PC-3 (cell line): ENCODE measurements at regions of chr18 and their contacts with region 1.

Region 1: GRCh38 chr18:23077493-23078256 is 57.6 kb upstream of the CABLES1 start:
- DNase-seq: peak; percentile 60
- ATAC-seq: peak; percentile 94
- H3K4me3 ChIP-seq: no peak overlapping the region
- H3K27ac ChIP-seq: 0 out of 2 replicates have a peak overlapping the region, but pooled peaks have one; percentile 2
- H3K4me1 ChIP-seq: peaks cover 13% of the 10 kb centered on the region
- H3K27me3 ChIP-seq: no peaks in the 10 kb centered on the region
- CTCF ChIP-seq: peak; percentile 68

Region 2: DNA sequence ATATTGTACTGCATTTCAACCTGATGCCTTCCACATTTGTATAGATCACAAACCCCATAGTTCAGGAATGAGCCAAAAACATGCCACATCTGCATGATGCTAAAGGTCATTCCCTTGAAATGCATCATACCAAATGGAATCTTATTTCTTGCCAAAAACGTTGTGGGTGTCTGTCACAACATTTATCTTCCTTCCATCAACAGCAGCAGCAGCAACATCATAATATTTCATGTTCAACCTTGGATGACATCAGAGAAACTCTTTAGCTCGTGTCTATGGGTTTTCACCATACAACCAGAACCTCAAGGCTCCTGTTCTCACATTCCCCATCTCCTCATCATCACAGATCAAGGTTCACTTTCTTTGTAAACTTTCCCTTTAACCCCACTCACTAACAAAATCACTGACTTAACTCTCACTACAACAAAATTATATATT is 438.6 kb before region 1 on chr18:
- CTCF ChIA-PET with region 1: no interaction called
- POLR2A ChIA-PET with region 1: no interaction called
- intact Hi-C with region 1: no loop called
- DNase-seq: peak; percentile 76
- ATAC-seq: peak; percentile 14; the same call in 1 of the 2 replicates
- H3K4me3 ChIP-seq: no peak overlapping the region
- H3K27ac ChIP-seq: no peak overlapping the region
- H3K4me1 ChIP-seq: peaks cover 31% of the 10 kb centered on the region
- H3K27me3 ChIP-seq: no peaks in the 10 kb centered on the region
- CTCF ChIP-seq: no peak

Region 3: GRCh38 chr18:23115683-23116096 is 38.0 kb after region 1 on chr18:
- CTCF ChIA-PET with region 1: no interaction called
- POLR2A ChIA-PET with region 1: no interaction called
- intact Hi-C with region 1: loop called (anchors 5 kb)
- DNase-seq: peak; percentile 99
- ATAC-seq: peak; percentile 98
- H3K4me3 ChIP-seq: no peak overlapping the region
- H3K27ac ChIP-seq: peak overlapping the region; percentile 95
- H3K4me1 ChIP-seq: peaks cover 24% of the 10 kb centered on the region
- H3K27me3 ChIP-seq: no peaks in the 10 kb centered on the region
- CTCF ChIP-seq: no peak

Region 4: DNA sequence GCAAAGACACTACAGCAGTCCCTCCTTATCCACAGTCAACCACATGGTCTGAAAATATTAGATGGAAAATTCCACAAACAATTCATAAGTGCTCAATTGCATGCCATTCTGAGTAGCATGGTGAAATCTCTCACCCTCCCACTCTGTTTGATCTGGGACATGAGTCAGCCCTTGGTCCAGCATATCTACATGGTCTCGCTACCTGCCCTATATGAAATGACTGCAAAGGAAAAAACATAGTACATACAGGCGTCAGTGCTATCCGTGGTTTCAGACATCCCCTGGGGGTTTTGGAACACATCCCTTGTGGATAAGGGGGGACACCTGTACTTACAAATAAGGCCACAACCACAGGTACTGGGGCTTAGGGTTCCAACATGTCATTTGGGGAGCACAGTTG is 131.4 kb after region 1 on chr18:
- CTCF ChIA-PET with region 1: no interaction called
- POLR2A ChIA-PET with region 1: no interaction called
- intact Hi-C with region 1: no loop called
- DNase-seq: peak; percentile 71
- ATAC-seq: peak; percentile 87
- H3K4me3 ChIP-seq: no peak overlapping the region
- H3K27ac ChIP-seq: peak overlapping the region; percentile 56
- H3K4me1 ChIP-seq: peaks cover 26% of the 10 kb centered on the region
- H3K27me3 ChIP-seq: no peaks in the 10 kb centered on the region
- CTCF ChIP-seq: no peak

Region 5: DNA sequence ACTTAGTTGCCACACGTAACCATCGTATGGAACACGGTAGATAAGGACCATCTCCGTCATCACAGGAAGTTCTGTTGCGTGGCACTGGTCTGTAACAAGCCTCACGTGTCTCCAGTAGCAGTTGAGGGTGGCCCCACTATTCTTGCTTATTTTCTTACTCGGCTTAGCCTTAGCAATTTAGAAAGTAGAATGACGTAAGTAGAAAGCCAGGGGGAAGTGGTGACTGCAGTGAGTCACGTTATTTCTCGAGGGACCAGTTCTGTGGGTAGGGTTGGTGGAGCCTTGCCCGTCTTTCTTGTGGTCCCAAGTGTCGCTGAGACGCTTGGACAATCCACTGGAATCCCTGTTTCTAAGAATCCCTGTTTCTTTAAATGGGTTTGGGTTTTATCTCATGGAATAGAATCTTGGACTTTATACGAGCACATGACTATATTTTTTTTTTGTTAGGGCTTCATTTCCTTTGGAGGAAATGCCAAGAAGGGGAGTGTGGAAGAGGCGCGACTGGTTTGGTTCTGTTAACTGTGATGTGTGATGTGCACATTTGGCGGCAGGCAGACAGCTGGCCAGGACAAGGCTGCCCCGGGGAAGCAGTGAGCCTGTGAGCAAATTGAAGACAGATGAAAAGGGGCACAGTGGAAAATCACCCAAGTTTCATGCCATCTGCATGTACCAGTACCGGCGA is 153.8 kb after region 1 on chr18:
- CTCF ChIA-PET with region 1: no interaction called
- POLR2A ChIA-PET with region 1: no interaction called
- intact Hi-C with region 1: loop called (anchors 5 kb)
- DNase-seq: peak; percentile 92
- ATAC-seq: peak; percentile 77
- H3K4me3 ChIP-seq: no peak overlapping the region
- H3K27ac ChIP-seq: peak overlapping the region; percentile 79
- H3K4me1 ChIP-seq: peaks cover 38% of the 10 kb centered on the region
- H3K27me3 ChIP-seq: no peaks in the 10 kb centered on the region
- CTCF ChIP-seq: no peak

Region 6: GRCh38 chr18:23291456-23292205 is 214.0 kb after region 1 on chr18:
- CTCF ChIA-PET with region 1: no interaction called
- POLR2A ChIA-PET with region 1: no interaction called
- intact Hi-C with region 1: no loop called
- DNase-seq: peak; percentile 86
- ATAC-seq: peak; percentile 95
- H3K4me3 ChIP-seq: no peak overlapping the region
- H3K27ac ChIP-seq: peak overlapping the region; percentile 71
- H3K4me1 ChIP-seq: peaks cover 20% of the 10 kb centered on the region
- H3K27me3 ChIP-seq: no peaks in the 10 kb centered on the region
- CTCF ChIP-seq: no peak

Region 7: GRCh38 chr18:23307567-23308295 is 230.1 kb after region 1 on chr18:
- CTCF ChIA-PET with region 1: interaction called, 11 read pairs
- POLR2A ChIA-PET with region 1: no interaction called
- intact Hi-C with region 1: no loop called
- DNase-seq: peak; percentile 32
- ATAC-seq: peak; percentile 16; the same call in 1 of the 2 replicates
- H3K4me3 ChIP-seq: no peak overlapping the region
- H3K27ac ChIP-seq: no peak overlapping the region
- H3K4me1 ChIP-seq: peaks cover 28% of the 10 kb centered on the region
- H3K27me3 ChIP-seq: no peaks in the 10 kb centered on the region
- CTCF ChIP-seq: no peak

Region 8: DNA sequence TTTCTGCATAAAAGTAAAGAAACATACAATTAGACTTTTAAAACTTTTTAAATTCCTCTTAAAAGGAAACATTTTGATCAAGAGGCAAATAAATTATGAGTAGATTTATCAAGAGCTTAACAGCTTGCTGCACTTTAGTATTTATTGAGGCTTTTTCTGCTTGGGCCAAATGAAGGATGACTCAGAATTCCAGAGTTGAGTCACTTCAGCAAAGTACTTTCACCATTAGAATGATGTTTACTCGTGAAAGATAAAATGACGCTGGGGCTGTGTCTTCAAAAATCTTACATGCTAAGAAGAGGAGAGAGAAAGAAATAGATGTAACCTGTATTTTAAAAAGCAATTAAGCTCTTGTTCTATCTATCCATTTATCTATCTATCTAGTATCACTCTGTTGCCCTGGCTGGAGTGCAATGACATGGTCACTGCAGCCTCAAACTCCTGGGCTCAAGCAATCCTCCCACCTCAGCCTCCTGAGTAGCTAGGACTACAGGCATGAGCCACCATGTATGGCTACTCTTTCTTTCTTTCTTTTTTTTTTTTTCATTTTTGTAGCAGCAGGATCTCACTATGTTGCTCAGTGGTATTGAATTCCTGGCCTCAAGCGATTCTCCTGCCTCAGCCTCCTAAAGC is 300.1 kb after region 1 on chr18:
- CTCF ChIA-PET with region 1: interaction called, 3 read pairs
- POLR2A ChIA-PET with region 1: no interaction called
- intact Hi-C with region 1: loop called (anchors 2 kb)
- DNase-seq: peak; percentile 89
- ATAC-seq: peak; percentile 65
- H3K4me3 ChIP-seq: peak overlapping the region; percentile 29; the same call in 1 of the 2 replicates
- H3K27ac ChIP-seq: peak overlapping the region; percentile 86
- H3K4me1 ChIP-seq: peaks cover 38% of the 10 kb centered on the region
- H3K27me3 ChIP-seq: no peaks in the 10 kb centered on the region
- CTCF ChIP-seq: no peak

Region 9: GRCh38 chr18:23412351-23412964 is 334.8 kb after region 1 on chr18:
- CTCF ChIA-PET with region 1: no interaction called
- POLR2A ChIA-PET with region 1: no interaction called
- intact Hi-C with region 1: loop called (anchors 1 kb)
- DNase-seq: no peak
- ATAC-seq: no peak
- H3K4me3 ChIP-seq: no peak overlapping the region
- H3K27ac ChIP-seq: no peak overlapping the region
- H3K4me1 ChIP-seq: no peaks in the 10 kb centered on the region
- H3K27me3 ChIP-seq: no peaks in the 10 kb centered on the region
- CTCF ChIP-seq: no peak